ENCODE measurements at regions of chr17 and their contacts with region 1.

Region 1: GRCh38 chr17:8222630-8223356 is 12.4 kb upstream of the AURKB start:
- DNase-seq: peak; percentile 80 to 92 (median 87)
- H3K4me3 ChIP-seq: peak overlapping the region; percentile 98
- H3K4me3 Mint-ChIP-seq: peak overlapping the region; percentile 86 to 98 (median 97)
- H3K27ac ChIP-seq: peak overlapping the region; percentile 86
- H3K27ac Mint-ChIP-seq: peak overlapping the region; percentile 94 to 100 (median 96)
- H3K4me1 ChIP-seq: peaks cover 41% of the 10 kb centered on the region
- H3K4me1 Mint-ChIP-seq: peaks cover 64 to 83% (median 79%) of the 10 kb centered on the region in 3 donors
- H3K27me3 ChIP-seq: no peaks in the 10 kb centered on the region
- H3K27me3 Mint-ChIP-seq: peaks cover 0 to 31% of the 10 kb centered on the region in 2 donors

Region 2: GRCh38 chr17:8138672-8139371 is 84.0 kb before region 1 on chr17:
- CTCF ChIA-PET with region 1: interaction called, 15 read pairs
- POLR2A ChIA-PET with region 1: interaction called, 22 read pairs
- DNase-seq: peak; percentile 92 to 97 (median 95)
- H3K4me3 ChIP-seq: peak overlapping the region; percentile 97
- H3K4me3 Mint-ChIP-seq: no peak overlapping the region
- H3K27ac ChIP-seq: peak overlapping the region; percentile 94
- H3K27ac Mint-ChIP-seq: no peak overlapping the region
- H3K4me1 ChIP-seq: peaks cover 22% of the 10 kb centered on the region
- H3K4me1 Mint-ChIP-seq: peaks cover 0 to 2% (median 0%) of the 10 kb centered on the region in 3 donors
- H3K27me3 ChIP-seq: no peaks in the 10 kb centered on the region
- H3K27me3 Mint-ChIP-seq: peaks cover 0 to 5% of the 10 kb centered on the region in 2 donors

Region 3: GRCh38 chr17:8162233-8162996 is 60.4 kb before region 1 on chr17 and contains the start of gene VAMP2:
- CTCF ChIA-PET with region 1: interaction called, 11 read pairs
- POLR2A ChIA-PET with region 1: interaction called, 37 read pairs
- DNase-seq: peak; percentile 81 to 90 (median 86)
- H3K4me3 ChIP-seq: peak within 1 kb of the TSS; percentile 96
- H3K4me3 Mint-ChIP-seq: peak within 1 kb of the TSS; percentile 87 to 95 (median 93)
- H3K27ac ChIP-seq: peak within 1 kb of the TSS; percentile 98
- H3K27ac Mint-ChIP-seq: peak within 1 kb of the TSS; percentile 94 to 100 (median 98)
- H3K4me1 ChIP-seq: peaks cover 60% of the 10 kb centered on the region
- H3K4me1 Mint-ChIP-seq: peaks cover 54 to 66% (median 58%) of the 10 kb centered on the region in 3 donors
- H3K27me3 ChIP-seq: no peaks in the 10 kb centered on the region
- H3K27me3 Mint-ChIP-seq: peaks cover 0 to 3% of the 10 kb centered on the region in 2 donors
- total RNA-seq, gene VAMP2: 38.3 to 41.0 TPM

Region 4: GRCh38 chr17:8248751-8249607 is 26.2 kb after region 1 on chr17 and contains the start of gene PFAS:
- CTCF ChIA-PET with region 1: interaction called, 51 read pairs
- POLR2A ChIA-PET with region 1: interaction called, 149 read pairs
- DNase-seq: peak; percentile 93 to 97 (median 95)
- H3K4me3 ChIP-seq: peak within 1 kb of the TSS; percentile 71
- H3K4me3 Mint-ChIP-seq: peak within 1 kb of the TSS; percentile 95 to 99 (median 99)
- H3K27ac ChIP-seq: peak within 1 kb of the TSS; percentile 100
- H3K27ac Mint-ChIP-seq: peak within 1 kb of the TSS; percentile 98 to 100 (median 100)
- H3K4me1 ChIP-seq: peaks cover 37% of the 10 kb centered on the region
- H3K4me1 Mint-ChIP-seq: peaks cover 45 to 52% (median 52%) of the 10 kb centered on the region in 3 donors
- H3K27me3 ChIP-seq: no peaks in the 10 kb centered on the region
- H3K27me3 Mint-ChIP-seq: peaks cover 0 to 9% of the 10 kb centered on the region in 2 donors
- total RNA-seq, gene PFAS: 167 to 168 TPM

Region 5: DNA sequence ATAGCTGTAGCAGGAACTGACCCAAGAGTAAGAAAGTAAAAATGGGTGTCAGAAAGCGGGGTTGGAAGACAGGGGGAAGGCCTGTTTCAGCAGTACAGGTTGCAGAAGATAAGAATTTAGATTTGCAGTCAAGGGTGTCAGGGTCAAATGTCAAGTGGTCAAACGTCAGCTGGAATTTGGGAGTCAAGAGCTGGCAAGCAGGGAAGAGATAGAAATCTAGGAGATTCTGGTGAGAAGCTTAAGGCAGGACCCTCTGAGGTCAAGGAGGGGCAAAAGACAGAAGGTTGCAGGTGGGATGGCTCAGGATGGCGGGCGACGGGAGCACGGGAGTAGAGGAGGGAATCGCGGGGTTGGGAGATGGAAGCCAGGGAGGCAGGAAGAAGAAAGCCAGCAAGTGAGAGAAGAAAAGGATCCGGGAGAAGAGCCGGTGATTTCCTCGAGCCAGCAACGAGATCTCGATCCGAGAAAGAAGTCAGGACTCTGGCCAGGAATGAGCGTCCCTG is 72.1 kb after region 1 on chr17:
- CTCF ChIA-PET with region 1: interaction called, 21 read pairs
- POLR2A ChIA-PET with region 1: interaction called, 19 read pairs
- DNase-seq: no peak
- H3K4me3 ChIP-seq: peak overlapping the region; percentile 87
- H3K4me3 Mint-ChIP-seq: peak overlapping the region; percentile 89 to 96 (median 92)
- H3K27ac ChIP-seq: peak overlapping the region; percentile 81
- H3K27ac Mint-ChIP-seq: peak overlapping the region; percentile 86 to 99 (median 95)
- H3K4me1 ChIP-seq: peaks cover 17% of the 10 kb centered on the region
- H3K4me1 Mint-ChIP-seq: peaks cover 31 to 44% (median 31%) of the 10 kb centered on the region in 3 donors
- H3K27me3 ChIP-seq: no peaks in the 10 kb centered on the region
- H3K27me3 Mint-ChIP-seq: peaks cover 0 to 5% of the 10 kb centered on the region in 2 donors